Vagina (tissue), 2 donors: ENCODE measurements at regions of chr16 and their contacts with region 1.

Region 1: DNA sequence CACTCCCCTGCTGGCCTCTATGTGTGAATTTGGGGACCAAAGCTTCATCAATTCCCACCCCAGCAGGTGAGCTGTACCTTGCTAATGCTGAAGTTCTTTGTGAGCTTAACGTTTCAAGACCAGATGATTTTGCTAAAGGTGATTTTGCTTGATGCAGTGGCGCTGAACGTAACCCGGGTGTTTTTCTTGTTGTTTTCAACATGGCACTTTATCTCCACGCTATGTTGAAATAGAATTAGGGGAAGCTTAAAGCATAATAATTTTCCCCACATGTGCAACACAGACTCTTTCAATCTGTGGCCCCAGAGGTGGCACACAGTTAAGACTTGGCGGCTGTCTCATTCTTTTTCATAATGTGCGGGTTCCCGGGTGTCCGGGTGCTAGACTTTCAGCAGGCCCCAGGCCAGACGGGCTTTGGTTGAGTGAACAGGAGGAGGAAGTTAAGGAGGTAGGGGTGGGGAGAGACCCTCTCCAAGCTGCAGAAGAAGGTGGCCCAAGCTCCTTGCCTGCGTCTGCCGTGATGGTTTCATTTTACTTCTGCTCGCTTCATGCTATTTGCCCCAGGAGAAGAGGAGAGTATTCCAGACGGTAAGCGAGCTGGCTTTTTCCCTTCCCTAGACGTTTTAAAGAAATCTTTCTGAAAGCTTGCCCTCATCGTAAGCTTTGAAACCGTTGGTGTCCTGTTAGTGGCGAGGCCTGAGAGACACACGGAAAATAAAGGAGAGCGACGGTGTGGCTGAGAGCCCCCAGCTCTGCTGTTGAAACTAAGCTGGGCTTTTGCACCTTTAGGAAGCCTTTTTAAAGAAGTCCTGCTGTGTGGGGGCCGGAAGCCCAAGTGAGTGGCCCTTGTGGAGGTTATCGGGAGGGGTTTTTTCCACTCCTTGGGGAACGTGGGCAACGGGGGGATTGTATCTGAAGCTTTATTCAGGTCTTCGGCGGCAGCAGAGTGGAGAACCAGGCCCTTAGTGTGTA is 4.2 kb downstream of the FOXC2 start:
- DNase-seq: no peak
- H3K4me3 ChIP-seq: no peak overlapping the region
- H3K27ac ChIP-seq: no peak overlapping the region
- H3K4me1 ChIP-seq: peaks cover 15% of the 10 kb centered on the region
- H3K27me3 ChIP-seq: no peaks in the 10 kb centered on the region
- CTCF ChIP-seq: no peak
- POLR2A ChIP-seq: no peak

Region 2: DNA sequence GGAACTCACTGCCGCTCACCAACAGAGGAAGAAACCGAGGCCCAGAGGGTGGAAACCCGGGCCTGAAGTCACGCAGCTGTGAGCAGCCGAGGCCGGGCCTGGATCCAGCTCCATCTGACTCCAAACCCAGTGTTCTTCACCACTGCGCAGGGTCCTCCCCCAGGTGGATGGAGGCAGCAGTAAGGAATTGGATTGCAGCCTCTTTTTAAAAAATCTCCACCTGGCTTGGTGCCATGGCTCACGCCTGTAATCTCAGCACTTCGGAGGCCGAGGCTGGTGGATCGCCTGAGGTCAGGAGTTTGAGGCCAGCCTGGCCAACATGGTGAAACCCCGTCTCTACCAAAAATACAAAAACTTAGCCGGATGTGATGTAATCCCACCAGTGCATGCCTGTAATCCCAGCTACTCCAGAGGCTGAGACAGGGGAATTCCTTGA is 184.7 kb after region 1 on chr16:
- intact Hi-C with region 1: loop called (anchors 5 kb)
- DNase-seq: no peak
- H3K4me3 ChIP-seq: no peak overlapping the region
- H3K27ac ChIP-seq: no peak overlapping the region
- H3K4me1 ChIP-seq: no peaks in the 10 kb centered on the region
- H3K27me3 ChIP-seq: no peaks in the 10 kb centered on the region
- CTCF ChIP-seq: no peak
- POLR2A ChIP-seq: no peak